ENCODE measurements at regions of chr20 and their contacts with region 1.

Region 1: DNA sequence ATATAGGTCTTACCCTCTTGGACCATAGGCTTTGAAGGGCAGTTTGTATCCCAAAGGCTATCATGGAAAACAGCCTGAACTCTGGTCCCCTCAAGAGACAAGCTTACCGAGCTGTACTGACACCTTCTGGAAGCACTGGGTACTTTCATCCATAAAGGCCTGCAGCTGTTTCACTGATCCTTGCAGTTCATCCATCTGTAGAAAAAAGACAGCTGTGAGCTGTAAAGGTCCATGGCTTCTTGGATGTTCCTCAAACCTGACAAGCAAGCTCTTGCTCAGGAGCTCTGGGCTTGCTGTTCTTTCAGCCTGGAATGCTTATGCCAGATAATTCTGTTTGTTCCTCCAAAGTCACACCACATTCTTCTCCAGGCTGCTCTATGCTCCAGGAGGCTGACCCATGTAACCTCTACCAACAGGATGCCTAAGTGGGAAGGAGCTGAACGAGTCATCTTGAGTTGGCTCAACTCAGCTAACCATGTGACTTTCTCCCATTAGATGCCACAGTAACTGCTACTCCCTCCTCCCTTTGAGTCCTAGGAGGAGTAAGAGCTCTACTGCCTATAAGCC is 8.8 kb upstream of the NDRG3 start:
- DNase-seq: peak; percentile 84
- H3K4me3 ChIP-seq: no peak overlapping the region
- H3K27ac ChIP-seq: peak overlapping the region; percentile 7 to 75 (median 64)
- H3K4me1 ChIP-seq: peaks cover 0 to 35% (median 13%) of the 10 kb centered on the region in 4 donors
- H3K27me3 ChIP-seq: no peaks in the 10 kb centered on the region
- CTCF ChIP-seq: peak; percentile 69 to 82 (median 79)
- EP300 ChIP-seq: no peak
- POLR2A ChIP-seq: no peak

Region 2: DNA sequence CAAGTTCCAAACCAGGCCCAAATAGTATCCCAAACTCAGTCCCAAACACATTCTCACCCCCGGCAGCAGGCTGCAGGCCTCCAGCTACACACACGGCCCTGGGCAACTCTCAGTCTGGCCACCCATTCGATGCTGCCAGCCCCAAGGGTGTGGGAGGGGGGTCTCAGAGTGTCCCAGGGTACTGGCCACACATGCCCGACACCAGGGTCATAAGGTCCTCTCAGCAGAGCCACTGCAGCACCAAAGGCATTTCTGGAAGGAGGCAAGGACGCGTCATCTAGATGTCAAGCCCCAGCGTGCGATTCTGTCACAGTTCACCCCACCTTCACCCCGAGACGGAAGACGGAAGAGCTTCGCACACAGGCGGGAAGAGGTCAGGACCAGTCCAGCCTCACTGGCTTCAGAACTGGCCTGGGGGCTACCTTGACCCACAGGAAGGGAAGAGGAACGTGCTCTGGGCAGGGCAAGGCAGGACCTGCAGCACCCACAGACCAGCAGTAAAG is 203.9 kb before region 1 on chr20:
- intact Hi-C with region 1: loop called (anchors 5 kb)
- DNase-seq: peak; percentile 87
- H3K4me3 ChIP-seq: no peak overlapping the region
- H3K27ac ChIP-seq: peak overlapping the region; percentile 70 to 100 (median 99)
- H3K4me1 ChIP-seq: peaks cover 2 to 49% (median 28%) of the 10 kb centered on the region in 4 donors
- H3K27me3 ChIP-seq: no peaks in the 10 kb centered on the region
- CTCF ChIP-seq: no peak
- EP300 ChIP-seq: no peak
- POLR2A ChIP-seq: no peak

Region 3: GRCh38 chr20:36565520-36565919 is 189.2 kb before region 1 on chr20:
- intact Hi-C with region 1: no loop called
- DNase-seq: no peak
- H3K4me3 ChIP-seq: no peak overlapping the region
- H3K27ac ChIP-seq: no peak overlapping the region
- H3K4me1 ChIP-seq: peaks cover 0 to 7% (median 0%) of the 10 kb centered on the region in 4 donors
- H3K27me3 ChIP-seq: no peaks in the 10 kb centered on the region
- CTCF ChIP-seq: no peak
- EP300 ChIP-seq: no peak
- POLR2A ChIP-seq: no peak

Region 4: DNA sequence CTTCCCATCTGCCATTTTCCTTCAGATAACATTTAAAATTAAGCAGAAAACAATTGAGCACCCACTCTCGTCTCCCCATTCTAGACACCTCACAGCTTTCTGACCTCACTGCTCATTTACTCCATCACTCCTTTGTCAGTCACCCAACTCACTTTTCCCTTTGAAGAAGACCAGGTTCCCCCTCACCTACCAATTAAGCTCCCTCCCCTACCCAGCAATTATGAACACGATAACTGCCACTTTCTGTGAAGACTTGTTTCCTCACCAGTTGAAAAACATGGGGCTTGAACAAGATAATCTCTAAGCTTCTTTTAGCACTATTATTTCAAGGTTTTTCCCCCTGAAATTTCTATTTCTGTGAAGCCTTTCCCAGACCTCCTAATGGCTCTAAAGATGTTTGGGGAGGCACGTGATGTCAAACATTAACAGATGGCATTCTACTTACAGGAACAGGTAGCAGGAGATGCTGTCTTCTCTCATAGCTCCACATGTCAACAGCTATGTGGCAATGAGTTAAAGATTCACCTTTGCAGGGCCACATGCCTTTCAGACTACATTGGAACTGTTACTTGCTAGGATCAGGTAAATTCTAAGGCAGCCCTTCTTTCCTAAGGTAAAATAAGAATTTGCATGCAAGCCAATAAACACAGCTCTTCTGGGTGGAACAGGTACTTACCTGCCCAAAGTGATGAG is 83.9 kb before region 1 on chr20:
- intact Hi-C with region 1: loop called (anchors 5 kb)
- DNase-seq: no peak
- H3K4me3 ChIP-seq: no peak overlapping the region
- H3K27ac ChIP-seq: no peak overlapping the region
- H3K4me1 ChIP-seq: no peaks in the 10 kb centered on the region
- H3K27me3 ChIP-seq: no peaks in the 10 kb centered on the region
- CTCF ChIP-seq: no peak
- EP300 ChIP-seq: no peak
- POLR2A ChIP-seq: no peak

Region 5: DNA sequence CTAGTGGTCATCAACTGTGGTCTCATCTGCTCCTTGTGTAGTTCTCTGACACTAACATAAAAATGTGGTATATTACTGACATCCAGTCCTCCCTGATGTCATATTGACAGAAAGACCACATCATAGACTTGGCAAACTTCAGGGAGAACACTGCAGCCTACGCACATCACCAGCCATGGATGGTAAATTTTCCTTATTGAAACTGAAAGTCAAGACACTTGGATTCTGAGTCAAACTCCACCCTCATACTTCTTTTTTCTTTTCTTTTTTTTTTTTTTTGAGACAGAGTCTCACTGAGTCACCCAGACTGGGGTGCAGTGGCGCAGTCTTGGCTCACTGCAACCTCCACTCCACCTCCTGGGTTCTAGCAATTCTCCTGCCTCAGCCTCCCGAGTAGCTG is 34.2 kb before region 1 on chr20:
- intact Hi-C with region 1: loop called (anchors 5 kb)
- DNase-seq: no peak
- H3K4me3 ChIP-seq: no peak overlapping the region
- H3K27ac ChIP-seq: no peak overlapping the region
- H3K4me1 ChIP-seq: no peaks in the 10 kb centered on the region
- H3K27me3 ChIP-seq: no peaks in the 10 kb centered on the region
- CTCF ChIP-seq: no peak
- EP300 ChIP-seq: no peak
- POLR2A ChIP-seq: no peak

Region 6: GRCh38 chr20:36773597-36774390 is 19.1 kb after region 1 on chr20 and contains the start of gene DSN1:
- intact Hi-C with region 1: no loop called
- DNase-seq: peak; percentile 99
- H3K4me3 ChIP-seq: peak within 1 kb of the TSS; percentile 58 to 79 (median 73)
- H3K27ac ChIP-seq: peak within 1 kb of the TSS; percentile 93 to 97 (median 95)
- H3K4me1 ChIP-seq: peaks cover 0 to 34% (median 26%) of the 10 kb centered on the region in 4 donors
- H3K27me3 ChIP-seq: no peaks in the 10 kb centered on the region
- CTCF ChIP-seq: peak in 1 of 4 experiments; percentile 51
- EP300 ChIP-seq: no peak
- POLR2A ChIP-seq: peak; percentile 28 to 77
- total RNA-seq, gene DSN1: 4.4 to 6.4 (median 5.5) TPM